PC-9 (cell line): ENCODE measurements at regions of chr7 and their contacts with region 1.

Region 1: GRCh38 chr7:119007236-119007635 is 782.7 kb downstream of the ANKRD7 start:
- DNase-seq: no peak
- H3K4me3 ChIP-seq: no peak overlapping the region
- H3K27ac ChIP-seq: no peak overlapping the region
- H3K4me1 ChIP-seq: no peaks in the 10 kb centered on the region
- H3K27me3 ChIP-seq: no peaks in the 10 kb centered on the region
- CTCF ChIP-seq: no peak

Region 2: DNA sequence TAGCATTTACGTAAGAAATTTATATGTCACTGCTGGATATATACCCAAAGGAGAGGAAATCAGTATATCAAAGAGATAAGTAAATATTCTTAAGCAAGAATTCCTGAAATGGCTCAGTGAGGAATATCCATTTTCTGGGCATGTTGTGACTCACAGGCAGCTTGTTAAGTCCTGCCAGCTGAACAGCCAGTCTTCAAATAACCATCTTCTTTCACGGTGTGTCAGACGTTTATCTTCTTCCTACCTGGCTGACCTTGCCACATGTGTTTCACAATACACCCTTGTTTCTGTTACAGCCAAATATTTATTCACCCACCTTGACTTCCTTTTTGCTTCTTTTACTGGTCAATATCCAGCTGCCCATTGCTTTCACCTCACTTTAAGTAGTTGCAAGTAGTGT is 134.7 kb before region 1 on chr7:
- CTCF ChIA-PET with region 1: interaction called, 11 read pairs
- POLR2A ChIA-PET with region 1: no interaction called
- intact Hi-C with region 1: no loop called
- DNase-seq: no peak
- H3K4me3 ChIP-seq: no peak overlapping the region
- H3K27ac ChIP-seq: no peak overlapping the region
- H3K4me1 ChIP-seq: no peaks in the 10 kb centered on the region
- H3K27me3 ChIP-seq: no peaks in the 10 kb centered on the region
- CTCF ChIP-seq: no peak